Heart left ventricle (tissue), 16 donors: ENCODE measurements at regions of chr22 and their contacts with region 1.

Region 1: GRCh38 chr22:35627264-35628041 is 10.3 kb upstream of the MB start:
- DNase-seq: peak; percentile 83 to 86 (median 85)
- ATAC-seq: peak; percentile 62 to 81 (median 70)
- H3K4me3 ChIP-seq: peak overlapping the region; percentile 15 to 69 (median 58)
- H3K27ac ChIP-seq: peak overlapping the region; percentile 14 to 91 (median 82)
- H3K4me1 ChIP-seq: peaks cover 0 to 36% (median 10%) of the 10 kb centered on the region in 12 donors
- H3K27me3 ChIP-seq: no peaks in the 10 kb centered on the region
- CTCF ChIP-seq: peak; percentile 35 to 77 (median 62)
- POLR2A ChIP-seq: peak in 1 of 2 donors; percentile 35

Region 2: DNA sequence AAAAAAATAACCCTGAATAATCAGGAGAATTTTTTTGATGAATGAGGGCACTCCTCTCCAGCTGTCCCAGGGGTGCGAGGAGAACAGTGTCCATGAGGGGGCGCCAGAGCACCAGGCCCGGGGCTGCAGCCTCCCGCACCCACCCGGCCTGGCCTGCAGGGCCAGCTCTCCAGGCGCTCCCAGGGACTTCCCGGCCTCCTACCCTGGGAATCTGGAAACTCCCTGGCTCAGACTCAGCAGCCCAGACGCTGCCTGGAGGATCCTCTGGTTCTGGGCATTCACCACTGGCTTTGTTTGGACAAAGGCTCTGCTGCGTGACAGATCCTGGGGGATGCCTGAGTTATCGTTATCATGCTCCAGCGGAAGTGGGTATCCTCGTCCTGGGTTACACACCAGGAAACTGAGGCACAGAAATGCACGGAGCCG is 196.5 kb before region 1 on chr22:
- intact Hi-C with region 1: loop called in 9 of 10 experiments (anchors 1 to 2 kb)
- DNase-seq: peak; percentile 87 to 93 (median 91)
- ATAC-seq: peak; percentile 95 to 98 (median 98)
- H3K4me3 ChIP-seq: no peak overlapping the region
- H3K27ac ChIP-seq: peak overlapping the region in 6 of 12 donors; percentile 5 to 67 (median 48)
- H3K4me1 ChIP-seq: peaks cover 0 to 13% (median 7%) of the 10 kb centered on the region in 12 donors
- H3K27me3 ChIP-seq: no peaks in the 10 kb centered on the region
- CTCF ChIP-seq: peak; percentile 94 to 98 (median 96)
- POLR2A ChIP-seq: no peak

Region 3: DNA sequence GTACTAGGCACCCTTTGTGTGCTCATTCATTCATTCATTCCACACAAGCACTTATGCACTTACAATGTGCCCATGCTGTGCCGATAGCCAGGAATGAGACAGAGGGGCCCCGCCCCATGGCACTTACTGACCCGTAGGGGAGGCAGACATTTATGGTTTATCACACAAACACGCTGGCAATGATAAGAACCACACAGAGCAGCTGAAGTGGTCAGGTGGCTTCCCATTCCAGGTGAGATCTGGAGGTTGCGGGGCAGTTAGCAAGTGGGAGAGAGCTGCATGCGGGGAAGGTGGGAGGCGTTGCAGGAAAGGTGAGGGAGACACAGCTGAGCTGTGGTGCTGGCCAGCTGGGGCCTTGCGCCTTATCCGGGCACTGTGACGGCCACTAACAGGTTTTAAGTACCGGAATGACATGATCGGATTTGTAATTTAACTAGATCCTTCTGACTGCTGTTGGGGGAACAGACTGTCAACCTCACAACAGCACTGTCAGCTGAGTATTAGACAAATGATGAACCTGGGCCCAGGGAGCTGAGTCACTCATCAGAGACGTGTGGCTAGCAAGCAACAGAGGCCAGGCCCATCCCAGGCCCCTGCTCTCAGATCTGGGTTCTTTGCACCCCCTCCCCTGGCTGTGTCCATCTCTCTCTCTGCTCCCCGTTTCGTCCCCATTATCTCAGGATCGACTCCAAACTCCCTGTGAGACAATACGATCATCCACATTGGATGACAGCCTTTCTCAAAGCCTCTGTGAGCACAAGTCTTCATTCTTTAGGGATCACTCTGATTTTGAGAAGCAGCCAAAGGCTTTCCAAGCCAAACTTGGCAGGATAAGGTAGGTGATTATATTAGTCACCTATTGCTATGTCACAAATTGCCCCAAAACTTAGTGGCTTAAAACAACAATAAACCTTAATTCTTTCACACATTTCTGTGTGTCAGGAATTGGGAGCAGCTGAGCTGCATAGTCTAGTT is 58.4 kb before region 1 on chr22:
- intact Hi-C with region 1: no loop called
- DNase-seq: peak in 1 of 5 donors; percentile 26
- ATAC-seq: peak in 3 of 4 donors; percentile 11 to 37 (median 30)
- H3K4me3 ChIP-seq: no peak overlapping the region
- H3K27ac ChIP-seq: no peak overlapping the region
- H3K4me1 ChIP-seq: peaks cover 0 to 40% (median 15%) of the 10 kb centered on the region in 12 donors
- H3K27me3 ChIP-seq: peaks cover 0 to 3% (median 0%) of the 10 kb centered on the region in 9 donors
- CTCF ChIP-seq: no peak
- POLR2A ChIP-seq: no peak

Region 4: GRCh38 chr22:35678836-35679235 is 51.4 kb after region 1 on chr22:
- intact Hi-C with region 1: no loop called
- DNase-seq: no peak
- ATAC-seq: no peak
- H3K4me3 ChIP-seq: no peak overlapping the region
- H3K27ac ChIP-seq: no peak overlapping the region
- H3K4me1 ChIP-seq: peaks cover 0 to 7% (median 0%) of the 10 kb centered on the region in 12 donors
- H3K27me3 ChIP-seq: no peaks in the 10 kb centered on the region
- CTCF ChIP-seq: no peak
- POLR2A ChIP-seq: no peak

Region 5: GRCh38 chr22:35728639-35729308 is 101.3 kb after region 1 on chr22:
- intact Hi-C with region 1: loop called in 4 of 10 experiments (anchors 10 kb)
- DNase-seq: no peak
- ATAC-seq: no peak
- H3K4me3 ChIP-seq: no peak overlapping the region
- H3K27ac ChIP-seq: no peak overlapping the region
- H3K4me1 ChIP-seq: peaks cover 0 to 8% (median 0%) of the 10 kb centered on the region in 12 donors
- H3K27me3 ChIP-seq: no peaks in the 10 kb centered on the region
- CTCF ChIP-seq: no peak
- POLR2A ChIP-seq: no peak

Region 6: DNA sequence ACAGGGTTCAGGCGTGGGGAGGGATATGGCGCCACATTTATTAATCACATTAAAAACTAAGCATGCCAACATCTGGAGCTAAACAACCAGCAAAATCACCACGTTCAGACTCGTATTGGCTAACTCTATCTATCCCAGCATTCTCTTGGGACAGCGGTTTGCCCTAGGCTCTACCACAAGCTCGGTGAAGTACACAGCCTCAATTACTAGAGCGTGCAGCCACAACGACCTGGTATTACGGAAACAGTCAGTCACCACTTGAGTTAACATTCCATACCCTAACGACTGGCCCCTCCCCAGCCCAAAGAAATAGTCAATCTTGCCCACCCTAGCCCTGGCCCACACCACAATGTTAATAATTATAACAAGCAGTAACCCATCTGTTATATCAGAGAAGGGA is 122.4 kb after region 1 on chr22:
- intact Hi-C with region 1: loop called in 1 of 10 experiments (anchors 10 kb)
- DNase-seq: no peak
- ATAC-seq: peak in 2 of 4 donors; percentile 20 to 30
- H3K4me3 ChIP-seq: no peak overlapping the region
- H3K27ac ChIP-seq: no peak overlapping the region
- H3K4me1 ChIP-seq: peaks cover 0 to 48% (median 28%) of the 10 kb centered on the region in 12 donors
- H3K27me3 ChIP-seq: no peaks in the 10 kb centered on the region
- CTCF ChIP-seq: no peak
- POLR2A ChIP-seq: no peak

Region 7: DNA sequence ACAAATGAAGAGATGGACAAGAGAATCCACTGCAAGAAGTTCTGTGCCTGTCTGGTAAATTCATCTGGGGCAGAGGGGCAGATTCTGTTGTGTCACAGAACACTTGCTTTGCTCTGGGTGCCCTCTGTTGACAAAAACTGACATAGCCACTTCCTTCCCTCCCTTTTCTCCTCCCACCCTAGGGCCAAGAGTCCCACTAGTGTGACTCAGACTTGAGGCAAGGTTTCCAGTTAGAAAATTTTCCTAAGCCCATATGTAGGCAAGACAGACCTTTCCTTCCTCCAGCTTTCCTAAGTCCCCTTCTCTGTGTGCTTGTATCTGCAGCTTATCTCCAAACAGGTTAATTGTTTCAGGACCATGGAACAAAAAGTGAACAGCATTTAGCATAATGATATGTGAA is 294.3 kb after region 1 on chr22:
- intact Hi-C with region 1: loop called (anchors 1 to 5 kb)
- DNase-seq: peak in 4 of 5 donors; percentile 69 to 78 (median 71)
- ATAC-seq: peak; percentile 76 to 92 (median 89)
- H3K4me3 ChIP-seq: no peak overlapping the region
- H3K27ac ChIP-seq: peak overlapping the region in 7 of 12 donors; percentile 9 to 70 (median 26)
- H3K4me1 ChIP-seq: peaks cover 0 to 67% (median 43%) of the 10 kb centered on the region in 12 donors
- H3K27me3 ChIP-seq: no peaks in the 10 kb centered on the region
- CTCF ChIP-seq: peak; percentile 50 to 87 (median 76)
- POLR2A ChIP-seq: no peak

Region 8: DNA sequence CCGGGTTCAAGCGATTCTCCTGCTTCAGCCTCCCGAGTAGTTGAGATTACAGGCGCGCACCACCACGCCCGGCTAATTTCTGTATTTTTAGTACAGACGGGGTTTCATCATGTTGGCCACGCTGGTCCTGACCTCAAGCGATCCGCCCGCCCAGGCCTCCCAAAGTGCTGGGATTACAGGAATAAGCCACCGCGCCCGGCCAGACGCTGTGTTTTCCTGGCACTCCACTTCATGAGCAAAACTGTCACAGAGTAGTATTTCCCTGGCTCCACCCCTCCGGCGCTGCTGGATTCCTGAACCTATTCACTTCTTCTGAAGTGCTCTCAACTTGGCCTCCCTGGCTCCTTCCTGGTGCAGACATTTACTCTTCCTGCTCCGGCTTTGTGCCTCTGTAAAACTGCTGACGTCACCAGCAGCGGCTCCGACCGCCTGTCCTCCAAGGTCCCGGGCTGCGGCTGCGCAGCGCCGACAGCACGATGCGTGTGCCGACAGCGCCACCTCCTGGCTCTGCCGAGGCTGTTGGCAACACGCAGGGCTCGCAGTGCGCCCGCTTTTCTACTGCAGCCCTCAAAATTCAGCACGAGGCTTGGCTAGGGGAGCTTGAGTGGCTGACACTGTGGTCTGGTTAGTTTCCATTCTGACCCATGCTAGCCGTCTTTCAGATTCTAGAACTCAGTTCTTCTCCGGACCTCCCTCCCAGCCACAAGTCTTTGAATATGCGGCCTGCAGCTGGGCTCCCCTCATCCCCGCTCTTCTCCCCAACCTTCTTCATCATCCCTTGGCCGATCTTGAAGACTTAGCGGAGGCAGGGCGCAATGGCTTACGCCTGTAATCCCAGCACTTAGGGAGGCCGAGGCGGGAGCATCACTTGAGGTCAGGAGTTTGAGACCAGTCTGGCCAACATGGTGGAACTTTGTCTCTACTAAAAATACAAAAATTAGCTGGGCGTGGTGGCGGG is 496.5 kb after region 1 on chr22:
- intact Hi-C with region 1: loop called (anchors 1 to 10 kb)
- DNase-seq: peak; percentile 94 to 98 (median 97)
- ATAC-seq: peak; percentile 96 to 99 (median 98)
- H3K4me3 ChIP-seq: peak overlapping the region in 10 of 12 donors; percentile 15 to 51 (median 37)
- H3K27ac ChIP-seq: peak overlapping the region; percentile 53 to 94 (median 86)
- H3K4me1 ChIP-seq: peaks cover 0 to 10% (median 2%) of the 10 kb centered on the region in 12 donors
- H3K27me3 ChIP-seq: no peaks in the 10 kb centered on the region
- CTCF ChIP-seq: peak; percentile 95 to 99 (median 98)
- POLR2A ChIP-seq: peak in 1 of 2 donors; percentile 51